Sciatic nerve (tissue), 2 donors: ENCODE measurements at regions of chr5 and their contacts with region 1.

Region 1: GRCh38 chr5:168987543-168988300 is 313.2 kb downstream of the SLIT3 start:
- DNase-seq: peak; percentile 88
- ATAC-seq: peak; percentile 73

Region 2: DNA sequence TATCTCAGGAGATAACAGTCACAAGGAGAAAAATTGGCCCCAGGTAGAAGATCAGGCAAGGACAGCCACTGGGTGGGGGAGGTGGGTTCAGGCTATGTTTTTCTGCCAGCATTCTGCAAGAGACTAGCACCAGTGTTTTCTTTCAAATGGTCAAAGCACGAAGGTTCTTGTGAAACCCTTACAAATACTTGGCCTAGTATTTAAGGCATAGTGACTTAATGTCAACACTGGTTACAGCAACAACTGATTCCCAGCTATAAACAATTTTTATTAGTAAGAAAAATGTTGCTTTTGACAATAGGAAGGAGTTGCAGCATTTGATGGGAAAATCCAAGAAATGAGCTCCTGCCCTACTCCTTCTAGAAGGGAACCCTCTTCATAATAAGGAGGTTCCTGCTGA is 36.4 kb before region 1 on chr5:
- intact Hi-C with region 1: loop called (anchors 1 kb)
- DNase-seq: no peak
- ATAC-seq: no peak

Region 3: GRCh38 chr5:168962306-168962705 is 25.4 kb before region 1 on chr5:
- intact Hi-C with region 1: no loop called
- DNase-seq: no peak
- ATAC-seq: no peak

Region 4: GRCh38 chr5:169302491-169303118 is 314.9 kb after region 1 on chr5:
- intact Hi-C with region 1: loop called (anchors 2 kb)
- DNase-seq: peak; percentile 88
- ATAC-seq: peak; percentile 63